CD8-positive, alpha-beta T cell (primary cell): ENCODE measurements at regions of chr6 and their contacts with region 1.

Region 1: DNA sequence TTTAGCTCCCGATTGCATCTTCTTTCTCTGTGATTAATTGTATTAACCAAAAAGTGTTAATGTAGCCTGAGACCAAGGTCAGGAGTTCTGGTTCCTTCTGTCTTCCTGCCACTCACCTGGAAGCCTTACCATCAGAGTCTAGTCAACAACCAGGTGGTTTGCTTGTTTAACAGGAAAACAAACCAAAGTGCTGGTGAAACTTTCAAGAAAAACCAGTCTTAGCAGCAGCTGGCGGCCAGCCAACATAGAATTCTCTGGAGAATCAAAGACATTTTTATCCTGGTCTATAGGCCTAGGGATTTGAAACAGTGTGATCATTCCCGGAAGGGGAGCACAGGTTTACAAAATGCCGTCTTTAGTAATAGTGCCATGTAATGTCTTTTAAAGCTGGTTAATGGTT is 146.5 kb upstream of the AKIRIN2 start:
- DNase-seq: no peak
- ATAC-seq: no peak
- H3K4me3 ChIP-seq: no peak overlapping the region
- H3K4me3 Mint-ChIP-seq: no peak overlapping the region
- H3K27ac ChIP-seq: no peak overlapping the region
- H3K27ac Mint-ChIP-seq: no peak overlapping the region
- H3K4me1 ChIP-seq: no peaks in the 10 kb centered on the region
- H3K4me1 Mint-ChIP-seq: peaks cover 4% of the 10 kb centered on the region
- H3K27me3 ChIP-seq: no peaks in the 10 kb centered on the region
- H3K27me3 Mint-ChIP-seq: peaks cover 7% of the 10 kb centered on the region
- CTCF ChIP-seq: no peak

Region 2: GRCh38 chr6:87832025-87832825 is 16.3 kb before region 1 on chr6:
- CTCF ChIA-PET with region 1: interaction called, 12 read pairs
- POLR2A ChIA-PET with region 1: no interaction called
- intact Hi-C with region 1: no loop called
- DNase-seq: peak in 2 of 9 experiments; percentile 30 to 53
- ATAC-seq: peak; percentile 55
- H3K4me3 ChIP-seq: peak overlapping the region; percentile 34 to 52
- H3K4me3 Mint-ChIP-seq: peak overlapping the region; percentile 91
- H3K27ac ChIP-seq: peak overlapping the region; percentile 31 to 53
- H3K27ac Mint-ChIP-seq: peak overlapping the region; percentile 88
- H3K4me1 ChIP-seq: peaks cover 4% of the 10 kb centered on the region
- H3K4me1 Mint-ChIP-seq: peaks cover 8% of the 10 kb centered on the region
- H3K27me3 ChIP-seq: no peaks in the 10 kb centered on the region
- H3K27me3 Mint-ChIP-seq: peaks cover 2% of the 10 kb centered on the region
- CTCF ChIP-seq: no peak